ENCODE measurements at regions of chr2 and their contacts with region 1.

Region 1: GRCh38 chr2:44244129-44244871 is 31.0 kb upstream of the SLC3A1 start:
- DNase-seq: peak; percentile 85
- H3K4me3 ChIP-seq: peak overlapping the region; percentile 41
- H3K27ac ChIP-seq: no peak overlapping the region
- H3K4me1 ChIP-seq: peaks cover 8% of the 10 kb centered on the region
- H3K27me3 ChIP-seq: no peaks in the 10 kb centered on the region
- CTCF ChIP-seq: peak; percentile 69

Region 2: GRCh38 chr2:44087036-44087713 is 157.1 kb before region 1 on chr2:
- CTCF ChIA-PET with region 1: no interaction called
- POLR2A ChIA-PET with region 1: no interaction called
- intact Hi-C with region 1: loop called (anchors 2 kb)
- DNase-seq: peak; percentile 75
- H3K4me3 ChIP-seq: peak overlapping the region; percentile 41
- H3K27ac ChIP-seq: no peak overlapping the region
- H3K4me1 ChIP-seq: no peaks in the 10 kb centered on the region
- H3K27me3 ChIP-seq: no peaks in the 10 kb centered on the region
- CTCF ChIP-seq: peak; percentile 96

Region 3: DNA sequence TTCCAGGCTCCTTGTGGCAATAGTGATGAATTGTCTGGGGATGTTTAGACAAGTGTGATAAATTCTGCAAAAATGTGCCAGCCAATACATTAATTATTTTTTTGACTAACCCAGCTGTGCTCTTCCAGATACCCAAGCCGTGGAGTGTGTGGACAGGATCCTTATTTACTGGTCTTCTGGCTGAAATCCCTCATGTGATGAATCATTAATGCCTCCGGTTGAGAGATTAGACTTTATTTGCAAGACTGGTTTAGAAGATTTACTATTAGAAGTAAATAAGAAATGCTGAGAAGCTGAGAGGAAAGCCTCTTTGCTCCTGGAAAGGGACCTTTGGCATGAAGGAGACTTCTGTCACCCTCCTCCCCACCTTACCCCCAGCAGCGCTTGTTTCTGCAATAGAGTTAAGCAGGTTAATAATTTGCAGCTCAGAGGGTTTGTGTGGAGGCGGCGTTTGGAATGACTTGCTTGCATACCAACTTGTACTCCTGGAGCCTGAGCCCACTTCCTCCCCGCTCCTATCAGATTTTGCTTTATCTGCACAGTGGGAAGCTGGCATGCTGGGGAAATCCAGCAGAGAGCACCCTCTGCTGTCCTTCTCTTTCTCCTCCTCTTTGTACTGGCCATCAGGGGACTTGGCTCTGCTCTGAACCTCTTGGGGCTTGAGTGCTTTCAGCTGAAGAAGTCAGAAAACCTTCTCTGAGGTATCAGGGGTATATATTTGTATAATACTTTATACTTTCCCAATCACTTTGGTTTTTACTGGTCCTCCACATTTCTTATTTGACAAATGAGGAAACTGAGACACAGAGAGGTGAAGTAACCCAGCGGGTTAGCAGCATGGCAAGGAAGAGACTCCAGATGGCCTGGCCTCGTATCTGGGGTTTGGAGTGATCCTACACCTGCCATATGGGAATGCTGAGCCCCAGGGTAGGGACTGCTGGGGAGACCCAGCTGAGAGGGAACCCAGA is 47.3 kb after region 1 on chr2:
- CTCF ChIA-PET with region 1: no interaction called
- POLR2A ChIA-PET with region 1: no interaction called
- intact Hi-C with region 1: loop called (anchors 2 kb)
- DNase-seq: peak; percentile 77
- H3K4me3 ChIP-seq: no peak overlapping the region
- H3K27ac ChIP-seq: no peak overlapping the region
- H3K4me1 ChIP-seq: peaks cover 21% of the 10 kb centered on the region
- H3K27me3 ChIP-seq: no peaks in the 10 kb centered on the region
- CTCF ChIP-seq: peak; percentile 64

Region 4: GRCh38 chr2:44361330-44362206 is 117.3 kb after region 1 on chr2 and contains the starts of genes CAMKMT and PREPL:
- CTCF ChIA-PET with region 1: no interaction called
- POLR2A ChIA-PET with region 1: no interaction called
- intact Hi-C with region 1: loop called (anchors 10 kb)
- DNase-seq: peak; percentile 98
- H3K4me3 ChIP-seq: peak within 1 kb of the TSS; percentile 75
- H3K27ac ChIP-seq: peak within 1 kb of the TSS; percentile 98
- H3K4me1 ChIP-seq: peaks cover 7% of the 10 kb centered on the region
- H3K27me3 ChIP-seq: no peaks in the 10 kb centered on the region
- CTCF ChIP-seq: no peak
- total RNA-seq, gene CAMKMT: 10.4 and 12.5 TPM in 2 replicates
- total RNA-seq, gene PREPL: 47.6 and 48.2 TPM in 2 replicates

Region 5: DNA sequence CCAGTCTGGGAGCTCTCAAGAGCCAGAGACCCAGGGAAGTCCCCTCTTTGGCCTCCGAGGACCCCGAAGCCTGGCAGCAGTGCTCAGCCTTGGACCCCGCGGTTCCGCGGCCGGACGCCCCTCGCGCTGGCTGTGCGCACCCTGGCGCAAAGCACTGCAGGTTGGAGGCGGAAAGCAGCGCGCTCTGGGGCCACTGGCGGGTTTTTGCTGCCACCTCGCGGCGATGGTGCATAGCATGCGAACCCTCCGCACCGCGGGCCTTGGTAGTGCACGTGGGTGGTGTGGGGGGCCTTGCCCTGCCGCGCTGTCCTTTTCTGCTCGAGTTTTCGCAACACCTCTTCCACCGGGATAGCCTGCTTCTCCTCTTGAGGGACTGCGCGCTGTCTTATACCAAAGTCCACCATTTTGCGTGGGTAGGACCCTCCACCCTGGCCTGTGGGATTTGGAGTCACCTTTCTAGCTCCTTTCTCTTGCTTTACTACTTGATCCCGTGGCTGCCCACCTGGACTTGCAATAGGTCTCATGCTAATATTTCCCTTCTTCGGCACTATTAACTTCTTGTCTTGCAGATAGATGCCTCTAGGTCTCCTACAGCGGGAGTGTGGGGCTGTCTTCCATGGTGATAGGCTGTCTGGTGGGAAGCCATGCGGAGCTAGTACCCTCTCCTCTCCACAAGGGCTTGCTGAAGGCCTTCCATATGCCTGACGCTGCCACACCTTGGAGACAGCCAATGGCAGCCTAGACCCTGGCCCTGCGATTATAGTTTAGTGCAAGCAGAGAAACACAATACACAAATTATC is 711.5 kb after region 1 on chr2:
- CTCF ChIA-PET with region 1: no interaction called
- POLR2A ChIA-PET with region 1: no interaction called
- intact Hi-C with region 1: loop called (anchors 5 kb)
- DNase-seq: peak; percentile 83
- H3K4me3 ChIP-seq: peak overlapping the region; percentile 33
- H3K27ac ChIP-seq: no peak overlapping the region
- H3K4me1 ChIP-seq: no peaks in the 10 kb centered on the region
- H3K27me3 ChIP-seq: peaks cover 37% of the 10 kb centered on the region
- CTCF ChIP-seq: peak; percentile 88